ENCODE measurements at regions of chr6 and their contacts with region 1.

Region 1: GRCh38 chr6:84263557-84263956 is 36.1 kb upstream of the CEP162 start:
- DNase-seq: no peak
- ATAC-seq: no peak
- H3K4me3 ChIP-seq: no peak overlapping the region
- H3K27ac ChIP-seq: no peak overlapping the region
- H3K4me1 ChIP-seq: no peaks in the 10 kb centered on the region
- H3K27me3 ChIP-seq: no peaks in the 10 kb centered on the region; the same call in 1 of the 2 replicates
- CTCF ChIP-seq: no peak
- POLR2A ChIP-seq: no peak
- RAD21 ChIP-seq: no peak

Region 2: DNA sequence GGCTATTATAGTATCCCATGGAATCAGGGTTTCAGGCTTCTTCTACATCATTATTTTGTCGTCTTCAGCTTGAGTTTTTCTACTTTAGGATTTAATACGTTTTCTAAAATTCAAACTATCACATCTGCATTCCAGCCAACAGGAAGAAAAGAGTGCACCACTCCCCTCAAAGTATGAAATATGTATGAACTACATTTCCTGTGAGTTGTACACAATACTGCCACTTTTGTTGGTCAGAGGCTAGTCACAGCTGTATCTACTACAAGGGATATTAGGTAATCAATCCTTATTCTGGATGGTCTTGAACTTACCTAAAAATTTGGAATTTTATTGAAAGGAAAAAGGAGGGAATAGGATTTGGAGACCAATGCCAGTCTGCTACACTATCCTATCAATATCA is 736.4 kb after region 1 on chr6:
- CTCF ChIA-PET with region 1: no interaction called
- POLR2A ChIA-PET with region 1: interaction called, 10 read pairs
- dilution Hi-C with region 1: no loop called
- in situ Hi-C with region 1: no loop called
- intact Hi-C with region 1: no loop called
- DNase-seq: no peak
- ATAC-seq: no peak
- H3K4me3 ChIP-seq: no peak overlapping the region
- H3K27ac ChIP-seq: no peak overlapping the region
- H3K4me1 ChIP-seq: no peaks in the 10 kb centered on the region
- H3K27me3 ChIP-seq: no peaks in the 10 kb centered on the region
- CTCF ChIP-seq: no peak
- POLR2A ChIP-seq: no peak
- RAD21 ChIP-seq: no peak